Aorta (tissue), 5 donors: ENCODE measurements at regions of chr6 and their contacts with region 1.

Region 1: GRCh38 chr6:31834434-31835198 is 7.1 kb downstream of the HSPA1B start:
- DNase-seq: peak; percentile 92 to 95
- ATAC-seq: peak; percentile 90
- H3K4me3 ChIP-seq: peak overlapping the region; percentile 54 to 91
- H3K27ac ChIP-seq: peak overlapping the region; percentile 53 to 80
- H3K4me1 ChIP-seq: peaks cover 2 to 3% of the 10 kb centered on the region in 2 donors
- H3K27me3 ChIP-seq: no peaks in the 10 kb centered on the region

Region 2: DNA sequence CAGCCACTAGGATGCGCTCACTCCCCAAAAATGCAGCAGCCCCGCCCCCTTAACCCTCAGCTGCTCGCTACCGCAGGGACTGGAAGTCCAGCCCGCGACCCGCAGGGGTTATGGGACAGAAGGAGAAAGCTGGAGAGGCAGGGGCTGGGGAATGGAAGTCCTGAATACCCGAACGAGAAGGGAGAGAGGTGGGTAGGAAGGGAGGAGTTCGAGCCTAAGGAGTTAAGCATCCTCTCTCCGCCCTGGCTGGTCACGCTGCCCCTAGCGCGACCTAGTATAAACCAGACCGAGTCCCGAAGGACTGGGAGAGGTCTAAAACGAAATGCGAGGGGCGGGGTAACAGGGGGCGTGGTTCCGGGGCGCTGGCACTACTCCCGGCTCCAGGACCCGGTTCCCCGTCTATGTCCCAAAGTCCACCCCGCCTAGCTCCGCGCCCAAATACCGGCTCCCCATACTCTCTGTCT is 105.1 kb before region 1 on chr6:
- intact Hi-C with region 1: loop called in 1 of 2 experiments (anchors 2 kb)
- DNase-seq: peak; percentile 96 to 97
- ATAC-seq: peak; percentile 93
- H3K4me3 ChIP-seq: peak overlapping the region; percentile 83 to 92
- H3K27ac ChIP-seq: peak overlapping the region; percentile 88 to 94
- H3K4me1 ChIP-seq: no peaks in the 10 kb centered on the region
- H3K27me3 ChIP-seq: no peaks in the 10 kb centered on the region

Region 3: DNA sequence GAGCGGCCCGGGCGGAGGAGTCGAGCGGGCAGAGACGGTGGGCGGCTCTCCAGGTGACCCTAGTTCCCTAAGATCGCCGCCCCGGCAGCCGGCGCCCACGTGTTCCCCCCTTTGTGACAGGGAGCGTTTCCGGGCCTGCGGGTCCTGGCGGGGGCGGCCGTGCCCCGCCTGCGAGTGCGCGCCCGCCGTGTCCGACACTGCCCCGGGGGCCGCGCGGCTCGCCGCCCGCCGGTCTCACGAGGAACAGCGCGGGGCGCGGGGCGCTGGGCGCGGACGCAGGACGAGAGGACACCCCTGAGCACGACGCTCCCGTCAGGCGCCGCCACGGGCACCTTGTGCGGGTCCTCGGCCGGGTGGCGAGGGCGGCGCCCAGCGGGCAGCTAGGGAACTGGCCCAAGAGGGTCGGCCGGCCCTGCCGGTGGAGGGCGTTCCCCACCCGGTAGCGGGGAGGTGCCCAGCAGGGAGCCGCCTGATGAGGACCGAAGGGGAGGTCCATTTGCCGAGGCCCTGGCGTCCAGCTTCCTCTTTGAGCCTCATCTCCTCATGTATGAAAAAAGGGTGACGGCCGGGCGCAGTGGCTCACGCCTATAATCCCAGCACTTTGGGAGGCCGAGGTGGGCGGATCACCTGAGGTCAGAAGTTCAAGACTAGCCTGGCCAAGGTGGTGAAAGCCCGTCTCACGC is 38.9 kb before region 1 on chr6 and contains the start of gene VARS1:
- intact Hi-C with region 1: loop called (anchors 5 kb)
- DNase-seq: peak; percentile 96 to 97
- ATAC-seq: peak; percentile 94
- H3K4me3 ChIP-seq: peak within 1 kb of the TSS; percentile 43 to 78
- H3K27ac ChIP-seq: peak within 1 kb of the TSS; percentile 33 to 62
- H3K4me1 ChIP-seq: no peaks in the 10 kb centered on the region
- H3K27me3 ChIP-seq: no peaks in the 10 kb centered on the region
- total RNA-seq, gene VARS1: 44.4 to 49.6 TPM

Region 4: GRCh38 chr6:31862344-31863227 is 28.0 kb after region 1 on chr6 and contains the start of gene NEU1:
- intact Hi-C with region 1: loop called in 1 of 2 experiments (anchors 2 kb)
- DNase-seq: peak; percentile 99 to 100
- ATAC-seq: peak; percentile 98
- H3K4me3 ChIP-seq: peak within 1 kb of the TSS; percentile 43 to 48
- H3K27ac ChIP-seq: peak within 1 kb of the TSS in 1 of 2 donors; percentile 74
- H3K4me1 ChIP-seq: no peaks in the 10 kb centered on the region
- H3K27me3 ChIP-seq: no peaks in the 10 kb centered on the region
- total RNA-seq, gene NEU1: 23.9 to 24.6 TPM

Region 5: DNA sequence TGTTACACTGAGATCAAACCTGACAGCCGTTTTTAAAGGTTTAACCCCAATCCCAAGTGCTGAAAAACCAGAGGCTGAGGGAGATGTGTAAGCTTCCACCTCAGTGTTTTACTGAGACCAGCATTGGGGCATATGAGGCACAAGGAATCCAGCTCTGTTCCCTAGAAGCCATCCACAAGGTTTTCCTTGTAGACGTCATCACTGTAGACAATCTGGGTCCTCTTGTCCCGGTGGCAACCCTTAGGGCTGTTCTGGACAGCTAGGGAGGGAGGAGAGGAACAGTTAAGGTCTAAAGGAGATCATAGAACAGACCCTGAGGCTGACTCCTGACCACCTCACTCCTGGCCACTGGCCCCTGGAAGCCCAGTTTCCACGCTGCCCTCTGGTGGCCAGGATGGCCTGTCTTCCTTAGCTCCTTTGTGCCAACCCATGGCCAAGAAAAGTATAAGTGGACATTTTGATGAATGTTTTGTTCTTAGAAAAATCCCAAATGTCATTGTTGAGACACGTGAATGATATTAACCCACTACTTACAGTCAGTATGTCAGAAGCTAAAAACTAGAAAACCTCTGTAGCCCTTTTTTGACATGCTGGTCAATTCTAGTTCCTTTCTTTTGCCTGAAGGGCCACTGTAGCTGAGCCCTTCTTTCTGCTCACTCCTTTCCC is 117.7 kb after region 1 on chr6:
- intact Hi-C with region 1: no loop called
- DNase-seq: peak; percentile 80 to 90
- ATAC-seq: peak; percentile 62
- H3K4me3 ChIP-seq: no peak overlapping the region
- H3K27ac ChIP-seq: no peak overlapping the region
- H3K4me1 ChIP-seq: no peaks in the 10 kb centered on the region
- H3K27me3 ChIP-seq: no peaks in the 10 kb centered on the region